Common myeloid progenitor, CD34-positive (primary cell): ENCODE measurements at regions of chr6 and their contacts with region 1.

Region 1: DNA sequence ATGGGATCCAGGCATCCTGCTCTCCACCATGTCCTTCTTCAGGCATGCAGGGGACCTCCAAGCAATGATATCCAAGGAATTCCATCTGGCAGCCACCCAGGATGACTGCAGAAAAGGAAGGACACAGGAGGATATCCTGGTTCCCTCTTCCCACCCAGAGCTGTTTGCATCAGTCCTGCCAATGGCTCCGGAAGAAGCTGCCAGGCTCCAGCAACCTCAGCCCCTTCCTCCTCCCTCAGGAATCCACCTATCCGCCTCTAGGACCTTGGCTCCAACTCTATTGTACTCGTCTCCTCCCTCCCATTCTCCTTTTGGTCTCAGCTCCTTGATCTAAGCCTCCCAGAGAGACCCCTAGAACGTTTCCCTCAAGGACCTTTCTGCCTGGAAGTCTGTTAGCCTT is 733 bp upstream of the PSORS1C2 start:
- DNase-seq: no peak
- H3K4me3 ChIP-seq: no peak overlapping the region
- H3K27ac ChIP-seq: no peak overlapping the region
- H3K4me1 ChIP-seq: peaks cover 0 to 7% (median 4%) of the 10 kb centered on the region in 4 experiments
- H3K27me3 ChIP-seq: peaks cover 0 to 2% (median 0%) of the 10 kb centered on the region in 5 experiments

Region 2: GRCh38 chr6:31128093-31128676 is 11.4 kb before region 1 on chr6:
- CTCF ChIA-PET with region 1: interaction called, 17 read pairs
- POLR2A ChIA-PET with region 1: interaction called, 3 read pairs
- DNase-seq: peak; percentile 36 to 68 (median 53)
- H3K4me3 ChIP-seq: no peak overlapping the region
- H3K27ac ChIP-seq: no peak overlapping the region
- H3K4me1 ChIP-seq: peaks cover 0 to 16% (median 11%) of the 10 kb centered on the region in 4 experiments
- H3K27me3 ChIP-seq: no peaks in the 10 kb centered on the region